GM23248 (cell line): ENCODE measurements at regions of chr15 and their contacts with region 1.

Region 1: GRCh38 chr15:72155635-72156616 is 37.7 kb downstream of the SENP8 start:
- DNase-seq: peak; percentile 85
- H3K4me3 ChIP-seq: peak overlapping the region; percentile 79
- H3K27ac ChIP-seq: no peak overlapping the region
- H3K4me1 ChIP-seq: 0 out of 2 replicates have a peak, but pooled peaks cover 6% of the 10 kb centered on the region
- H3K27me3 ChIP-seq: no peaks in the 10 kb centered on the region

Region 2: GRCh38 chr15:71471347-71471746 is 684.6 kb before region 1 on chr15:
- in situ Hi-C with region 1: loop called (anchors 25 kb)
- DNase-seq: peak; percentile 10
- H3K4me3 ChIP-seq: no peak overlapping the region
- H3K27ac ChIP-seq: no peak overlapping the region
- H3K4me1 ChIP-seq: peaks cover 6% of the 10 kb centered on the region; the same call in 1 of the 2 replicates
- H3K27me3 ChIP-seq: no peaks in the 10 kb centered on the region